Adrenal gland (tissue), 19 donors: ENCODE measurements at regions of chr5 and their contacts with region 1.

Region 1: DNA sequence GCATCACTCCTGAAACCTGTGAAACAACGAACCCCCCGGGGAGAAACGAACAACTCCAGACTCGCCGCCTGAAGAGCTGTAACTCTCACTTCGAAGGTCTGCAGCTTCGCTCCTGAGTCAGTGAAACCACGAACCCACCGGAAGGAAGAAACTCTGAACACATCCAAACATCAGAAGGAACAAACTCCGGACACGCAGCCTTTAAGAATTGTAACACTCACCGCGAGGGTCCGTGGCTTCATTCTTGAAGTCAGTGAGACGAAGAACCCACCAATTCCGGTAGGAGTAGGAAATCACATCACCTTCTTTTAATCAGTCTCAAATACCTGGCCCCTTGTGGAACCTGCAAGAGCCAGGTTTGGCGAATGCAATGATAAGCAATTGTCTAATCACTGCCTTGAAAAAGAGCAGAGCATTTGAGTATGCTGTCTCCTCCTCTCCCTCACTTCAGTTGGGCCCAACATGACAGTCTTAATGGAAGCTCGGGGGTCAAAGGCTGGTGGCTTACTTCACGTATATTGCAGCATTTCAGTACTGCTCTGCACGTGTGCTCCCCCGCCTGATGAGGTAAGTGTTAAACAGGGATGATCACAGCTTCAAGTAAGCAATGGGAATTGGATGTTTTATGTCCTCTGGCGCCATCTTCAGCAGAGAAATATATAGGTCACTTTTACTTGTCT is 473 bp downstream of the IRGM start:
- DNase-seq: peak; percentile 46 to 74 (median 56)
- H3K4me3 ChIP-seq: no peak overlapping the region
- H3K27ac ChIP-seq: no peak overlapping the region
- H3K4me1 ChIP-seq: peaks cover 0 to 4% of the 10 kb centered on the region in 2 donors
- H3K27me3 ChIP-seq: no peaks in the 10 kb centered on the region
- CTCF ChIP-seq: peak; percentile 46 to 90 (median 83)
- POLR2A ChIP-seq: no peak

Region 2: GRCh38 chr5:150560401-150561193 is 286.2 kb before region 1 on chr5:
- intact Hi-C with region 1: loop called (anchors 5 to 10 kb)
- DNase-seq: peak; percentile 84 to 98 (median 92)
- H3K4me3 ChIP-seq: no peak overlapping the region
- H3K27ac ChIP-seq: peak overlapping the region in 1 of 5 donors; percentile 28
- H3K4me1 ChIP-seq: no peaks in the 10 kb centered on the region
- H3K27me3 ChIP-seq: no peaks in the 10 kb centered on the region
- CTCF ChIP-seq: peak; percentile 90 to 99 (median 96)
- POLR2A ChIP-seq: no peak

Region 3: DNA sequence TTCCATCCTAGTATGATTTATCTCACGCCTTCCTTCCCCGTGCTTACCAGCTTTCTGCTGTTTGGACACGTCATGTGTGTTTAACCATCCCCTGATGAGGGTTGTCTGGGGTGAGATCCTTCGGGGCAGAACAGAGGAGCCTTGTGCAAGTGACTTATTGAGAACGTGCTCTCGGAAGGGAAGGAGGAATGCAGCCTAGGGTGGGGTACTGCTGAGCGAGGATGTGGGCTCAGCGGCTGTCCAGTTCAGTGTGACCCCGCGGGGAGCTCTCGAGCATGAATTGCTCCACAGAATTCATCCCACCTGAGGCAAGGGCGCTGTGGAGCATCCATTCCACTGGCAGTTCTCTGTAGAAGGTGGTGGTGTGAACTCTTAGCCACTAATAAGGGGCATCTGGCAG is 181.8 kb before region 1 on chr5:
- intact Hi-C with region 1: loop called in 1 of 2 experiments (anchors 10 kb)
- DNase-seq: peak in 1 of 7 donors; percentile 28
- H3K4me3 ChIP-seq: no peak overlapping the region
- H3K27ac ChIP-seq: no peak overlapping the region
- H3K4me1 ChIP-seq: no peaks in the 10 kb centered on the region
- H3K27me3 ChIP-seq: no peaks in the 10 kb centered on the region
- CTCF ChIP-seq: no peak
- POLR2A ChIP-seq: no peak

Region 4: GRCh38 chr5:150700594-150701293 is 146.1 kb before region 1 on chr5 and contains the start of gene RBM22:
- intact Hi-C with region 1: loop called (anchors 10 kb)
- DNase-seq: peak; percentile 90 to 97 (median 93)
- H3K4me3 ChIP-seq: peak within 1 kb of the TSS; percentile 34 to 87 (median 76)
- H3K27ac ChIP-seq: peak within 1 kb of the TSS; percentile 73 to 99 (median 90)
- H3K4me1 ChIP-seq: peaks cover 11 to 17% of the 10 kb centered on the region in 2 donors
- H3K27me3 ChIP-seq: no peaks in the 10 kb centered on the region
- CTCF ChIP-seq: peak; percentile 37 to 71 (median 53)
- POLR2A ChIP-seq: peak; percentile 87 to 94
- total RNA-seq, gene RBM22: 28.2 to 80.4 (median 37.4) TPM

Region 5: GRCh38 chr5:150801117-150801927 is 45.5 kb before region 1 on chr5:
- intact Hi-C with region 1: loop called in 1 of 2 experiments (anchors 2 kb)
- DNase-seq: peak in 6 of 7 donors; percentile 25 to 59 (median 33)
- H3K4me3 ChIP-seq: peak overlapping the region in 1 of 4 donors; percentile 50
- H3K27ac ChIP-seq: peak overlapping the region in 4 of 5 donors; percentile 25 to 88 (median 54)
- H3K4me1 ChIP-seq: no peaks in the 10 kb centered on the region
- H3K27me3 ChIP-seq: no peaks in the 10 kb centered on the region
- CTCF ChIP-seq: peak; percentile 25 to 69 (median 56)
- POLR2A ChIP-seq: no peak